HepG2 (cell line): ENCODE measurements at regions of chr4 and their contacts with region 1.

Region 1: GRCh38 chr4:152810715-152811287 is 31.0 kb downstream of the ARFIP1 start:
- DNase-seq: peak; percentile 57
- ATAC-seq: peak; percentile 91
- H3K4me3 ChIP-seq: no peak overlapping the region
- H3K27ac ChIP-seq: no peak overlapping the region
- H3K4me1 ChIP-seq: peaks cover 75% of the 10 kb centered on the region
- H3K27me3 ChIP-seq: no peaks in the 10 kb centered on the region
- CTCF ChIP-seq: no peak
- EP300 ChIP-seq: no peak
- POLR2A ChIP-seq: no peak
- RAD21 ChIP-seq: no peak

Region 2: DNA sequence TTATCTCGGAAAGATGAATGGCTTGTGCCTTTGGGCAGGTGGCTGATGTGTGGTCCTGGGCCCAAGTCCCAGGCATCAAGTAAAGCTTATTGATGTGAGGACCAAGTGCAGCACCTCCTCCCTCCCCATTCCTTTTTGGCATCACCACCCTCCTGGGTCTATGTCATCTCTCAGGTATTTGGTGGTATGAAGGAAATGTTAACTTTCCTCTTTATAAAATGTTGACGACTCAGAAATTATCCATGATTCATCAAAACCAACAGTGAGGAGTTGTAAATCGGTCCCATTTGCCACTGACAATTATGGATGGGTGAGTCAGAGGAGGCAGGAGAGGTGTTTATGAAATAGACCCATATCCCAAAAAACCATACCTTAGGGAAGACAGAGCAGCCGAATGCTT is 820.6 kb before region 1 on chr4:
- CTCF ChIA-PET with region 1: no interaction called
- POLR2A ChIA-PET with region 1: no interaction called
- in situ Hi-C with region 1: no loop called
- intact Hi-C with region 1: no loop called
- DNase-seq: no peak
- ATAC-seq: no peak
- H3K4me3 ChIP-seq: no peak overlapping the region
- H3K27ac ChIP-seq: no peak overlapping the region
- H3K4me1 ChIP-seq: no peaks in the 10 kb centered on the region
- H3K27me3 ChIP-seq: 0 out of 5 replicates have a peak, but pooled peaks cover 0 to 4% of the 10 kb centered on the region in 2 experiments
- CTCF ChIP-seq: no peak
- EP300 ChIP-seq: no peak
- POLR2A ChIP-seq: no peak
- RAD21 ChIP-seq: no peak

Region 3: GRCh38 chr4:152836936-152837335 is 26.1 kb after region 1 on chr4:
- CTCF ChIA-PET with region 1: no interaction called
- POLR2A ChIA-PET with region 1: no interaction called
- in situ Hi-C with region 1: no loop called
- intact Hi-C with region 1: loop called (anchors 2 kb)
- DNase-seq: no peak
- ATAC-seq: no peak
- H3K4me3 ChIP-seq: no peak overlapping the region
- H3K27ac ChIP-seq: no peak overlapping the region
- H3K4me1 ChIP-seq: no peaks in the 10 kb centered on the region
- H3K27me3 ChIP-seq: no peaks in the 10 kb centered on the region
- CTCF ChIP-seq: no peak
- EP300 ChIP-seq: no peak
- POLR2A ChIP-seq: no peak
- RAD21 ChIP-seq: no peak